ENCODE measurements at regions of chr10 and their contacts with region 1.

Region 1: GRCh38 chr10:28393966-28394568 is 91.2 kb upstream of the MPP7 start:
- DNase-seq: peak; percentile 49
- CTCF ChIP-seq: peak; percentile 85

Region 2: DNA sequence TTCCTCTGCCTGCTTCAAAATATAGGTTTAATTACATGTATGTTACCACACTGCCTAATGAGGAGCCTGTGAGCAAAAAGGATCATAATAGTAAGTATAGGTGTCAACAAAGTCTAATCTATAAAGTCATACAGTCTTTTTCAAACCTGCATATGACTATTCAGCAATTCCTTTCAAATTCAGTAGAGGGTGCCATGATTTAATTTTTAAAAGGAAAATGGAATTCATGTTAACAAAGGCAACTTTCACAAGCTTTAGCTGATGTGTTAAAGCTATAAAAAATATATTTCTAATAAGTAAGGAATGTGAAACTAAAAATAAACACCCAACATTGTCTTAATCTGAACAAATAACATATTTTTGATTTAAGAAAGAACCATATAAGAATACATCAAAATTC is 143.3 kb before region 1 on chr10:
- CTCF ChIA-PET with region 1: interaction called, 13 read pairs
- POLR2A ChIA-PET with region 1: no interaction called
- DNase-seq: no peak
- CTCF ChIP-seq: peak; percentile 40

Region 3: DNA sequence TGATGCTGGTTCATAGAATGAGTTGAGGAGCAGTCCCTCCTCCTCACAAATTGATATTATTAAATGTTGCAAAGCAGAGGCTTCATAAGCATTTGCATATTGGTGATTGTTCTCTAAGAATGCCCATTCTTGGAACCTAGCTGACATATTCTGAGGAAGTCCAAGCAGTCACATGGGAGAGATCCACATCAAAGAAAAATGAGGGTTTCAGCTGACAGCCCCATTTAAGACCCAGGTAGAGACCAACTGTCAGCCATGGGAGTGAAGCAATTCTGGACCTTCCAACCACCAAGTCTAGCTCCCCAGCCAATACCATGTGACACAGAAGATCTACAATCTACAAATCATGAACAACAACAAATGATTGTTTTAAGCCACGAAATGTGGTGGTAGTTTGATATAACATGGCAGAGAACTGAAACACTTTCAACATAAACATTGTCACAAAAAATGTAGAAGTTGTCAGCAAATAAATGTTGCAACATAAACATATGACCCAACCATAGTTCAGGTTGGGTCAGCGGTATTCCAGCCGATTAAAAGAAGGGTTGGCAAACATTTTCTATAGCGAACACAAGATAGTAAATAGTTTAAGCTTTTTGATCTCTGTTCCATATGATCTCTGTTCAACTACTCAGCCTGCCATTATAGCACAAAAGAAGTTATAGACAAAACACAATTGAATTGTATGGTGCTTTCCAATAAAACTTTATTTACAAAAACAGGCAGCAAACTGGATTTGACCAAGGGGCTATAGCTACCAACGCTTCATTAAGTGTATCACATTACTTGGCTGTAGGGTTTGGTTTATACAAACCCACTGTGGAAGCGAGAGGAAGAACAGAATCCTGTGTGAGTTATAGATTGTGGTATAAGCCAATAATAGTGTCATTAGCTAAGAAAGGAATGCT is 49.8 kb before region 1 on chr10:
- CTCF ChIA-PET with region 1: no interaction called
- POLR2A ChIA-PET with region 1: no interaction called
- DNase-seq: no peak
- CTCF ChIP-seq: no peak

Region 4: GRCh38 chr10:28425422-28425821 is 31.4 kb after region 1 on chr10:
- CTCF ChIA-PET with region 1: interaction called, 10 read pairs
- POLR2A ChIA-PET with region 1: no interaction called
- DNase-seq: no peak
- CTCF ChIP-seq: no peak

Region 5: GRCh38 chr10:28545967-28546644 is 152.0 kb after region 1 on chr10:
- CTCF ChIA-PET with region 1: no interaction called
- POLR2A ChIA-PET with region 1: no interaction called
- DNase-seq: no peak
- CTCF ChIP-seq: no peak

Measured in GM10248 (cell line).